Activated B cell treated with CpG ODN at 0.5 μM for 24 hours (primary cell): ENCODE measurements at regions of chr4 and their contacts with region 1.

Region 1: DNA sequence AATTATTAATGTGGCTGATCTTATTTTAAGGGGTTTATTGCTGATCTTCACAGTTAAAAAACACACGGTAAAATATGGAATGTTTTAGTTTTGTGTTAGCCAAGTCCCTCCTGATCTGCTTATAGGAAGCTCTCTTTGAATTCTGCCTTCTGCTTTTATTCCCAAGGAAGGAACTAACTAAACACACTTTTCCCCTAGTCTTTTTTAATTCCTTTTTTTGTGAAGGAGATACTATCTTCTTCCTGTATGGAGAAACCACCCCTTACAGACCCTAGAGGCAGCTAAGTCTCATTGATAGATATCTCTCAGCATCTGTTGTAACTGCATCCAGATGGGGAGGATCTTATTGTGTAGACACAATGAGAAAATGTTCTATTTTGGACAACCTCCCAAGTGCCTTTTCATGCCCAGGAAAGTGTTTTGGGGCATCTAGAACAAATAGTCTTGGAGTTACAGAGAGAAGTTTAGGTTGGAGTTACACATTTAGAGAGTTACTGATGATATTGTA is 64.4 kb downstream of the AFF1 start:
- DNase-seq: no peak
- ATAC-seq: no peak
- H3K4me3 Mint-ChIP-seq: peak overlapping the region; percentile 6
- H3K27ac Mint-ChIP-seq: peak overlapping the region; percentile 42
- H3K4me1 Mint-ChIP-seq: peaks cover 49% of the 10 kb centered on the region
- H3K27me3 Mint-ChIP-seq: no peaks in the 10 kb centered on the region
- CTCF ChIP-seq: no peak

Region 2: DNA sequence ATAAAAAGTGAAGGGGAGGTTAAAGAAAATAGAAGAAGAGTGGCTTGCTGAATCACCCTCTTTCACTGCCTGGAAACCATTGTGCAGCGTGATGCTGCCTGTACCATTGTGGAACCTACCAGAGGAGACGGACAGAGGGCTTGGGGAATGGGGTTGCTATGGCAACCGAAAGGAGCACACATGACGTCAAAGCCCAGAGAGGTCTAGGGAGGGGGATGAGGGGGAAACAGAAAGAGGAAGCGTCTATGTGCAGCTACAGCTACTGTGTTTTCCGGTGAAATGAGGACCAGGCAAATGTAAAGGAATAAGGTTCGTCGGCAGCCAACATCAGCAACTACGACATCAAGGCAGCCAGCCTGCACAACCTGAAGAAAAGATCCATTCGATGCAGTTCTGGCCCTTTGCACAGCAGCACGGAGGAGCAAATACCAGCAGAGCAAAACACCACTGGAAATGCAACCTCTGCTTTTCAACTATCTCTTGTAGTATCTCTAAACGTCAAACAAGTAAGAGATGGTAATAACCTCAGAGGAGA is 639.2 kb before region 1 on chr4 and contains the start of gene MAPK10:
- CTCF ChIA-PET with region 1: no interaction called
- POLR2A ChIA-PET with region 1: no interaction called
- intact Hi-C with region 1: loop called (anchors 2 kb)
- DNase-seq: peak; percentile 55
- ATAC-seq: peak; percentile 98
- H3K4me3 Mint-ChIP-seq: peak within 1 kb of the TSS; percentile 83
- H3K27ac Mint-ChIP-seq: peak within 1 kb of the TSS; percentile 79
- H3K4me1 Mint-ChIP-seq: peaks cover 18% of the 10 kb centered on the region
- H3K27me3 Mint-ChIP-seq: no peaks in the 10 kb centered on the region
- CTCF ChIP-seq: no peak
- total RNA-seq, gene MAPK10: 0.20 and 0.75 TPM in 2 replicates

Region 3: DNA sequence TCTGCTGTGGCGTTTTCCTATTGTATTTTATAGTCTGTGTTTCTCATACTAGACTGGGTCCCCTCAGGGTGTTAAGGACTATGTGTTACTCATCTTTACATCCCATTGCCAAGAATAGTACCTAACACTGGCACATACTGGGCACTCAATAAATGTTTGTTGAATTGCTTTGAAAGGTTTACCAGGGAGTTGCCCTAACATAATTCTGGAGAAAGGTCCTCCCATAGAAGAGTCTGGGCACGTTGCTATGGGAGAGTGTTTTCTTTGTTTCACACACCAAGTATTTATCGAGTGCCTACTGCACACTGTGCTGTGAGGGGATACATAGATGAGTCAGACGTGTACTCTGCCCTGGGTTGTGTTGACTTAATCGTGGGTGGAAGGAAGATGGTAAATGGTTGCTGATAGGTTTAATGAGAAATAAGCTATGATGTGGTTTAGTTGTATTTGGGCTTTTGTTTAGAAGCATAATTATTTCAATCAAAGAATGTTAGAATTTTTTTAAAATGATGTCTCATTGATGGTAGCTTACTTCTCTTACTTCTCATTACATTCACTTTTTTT is 21.5 kb before region 1 on chr4:
- CTCF ChIA-PET with region 1: no interaction called
- POLR2A ChIA-PET with region 1: interaction called, 4 read pairs
- intact Hi-C with region 1: loop called (anchors 1 kb)
- DNase-seq: no peak
- ATAC-seq: peak; percentile 51
- H3K4me3 Mint-ChIP-seq: no peak overlapping the region
- H3K27ac Mint-ChIP-seq: no peak overlapping the region
- H3K4me1 Mint-ChIP-seq: peaks cover 50% of the 10 kb centered on the region
- H3K27me3 Mint-ChIP-seq: no peaks in the 10 kb centered on the region
- CTCF ChIP-seq: no peak

Region 4: GRCh38 chr4:87093443-87094123 is 94.4 kb after region 1 on chr4:
- CTCF ChIA-PET with region 1: interaction called, 15 read pairs
- POLR2A ChIA-PET with region 1: no interaction called
- intact Hi-C with region 1: loop called (anchors 1 kb)
- DNase-seq: no peak
- ATAC-seq: peak; percentile 89
- H3K4me3 Mint-ChIP-seq: no peak overlapping the region
- H3K27ac Mint-ChIP-seq: peak overlapping the region; percentile 62
- H3K4me1 Mint-ChIP-seq: peaks cover 20% of the 10 kb centered on the region
- H3K27me3 Mint-ChIP-seq: no peaks in the 10 kb centered on the region
- CTCF ChIP-seq: peak; percentile 15

Region 5: GRCh38 chr4:87209696-87210095 is 210.5 kb after region 1 on chr4:
- CTCF ChIA-PET with region 1: no interaction called
- POLR2A ChIA-PET with region 1: interaction called, 14 read pairs
- intact Hi-C with region 1: no loop called
- DNase-seq: peak; percentile 22
- ATAC-seq: peak; percentile 96
- H3K4me3 Mint-ChIP-seq: peak overlapping the region; percentile 71
- H3K27ac Mint-ChIP-seq: peak overlapping the region; percentile 80
- H3K4me1 Mint-ChIP-seq: peaks cover 20% of the 10 kb centered on the region
- H3K27me3 Mint-ChIP-seq: no peaks in the 10 kb centered on the region
- CTCF ChIP-seq: no peak

Region 6: DNA sequence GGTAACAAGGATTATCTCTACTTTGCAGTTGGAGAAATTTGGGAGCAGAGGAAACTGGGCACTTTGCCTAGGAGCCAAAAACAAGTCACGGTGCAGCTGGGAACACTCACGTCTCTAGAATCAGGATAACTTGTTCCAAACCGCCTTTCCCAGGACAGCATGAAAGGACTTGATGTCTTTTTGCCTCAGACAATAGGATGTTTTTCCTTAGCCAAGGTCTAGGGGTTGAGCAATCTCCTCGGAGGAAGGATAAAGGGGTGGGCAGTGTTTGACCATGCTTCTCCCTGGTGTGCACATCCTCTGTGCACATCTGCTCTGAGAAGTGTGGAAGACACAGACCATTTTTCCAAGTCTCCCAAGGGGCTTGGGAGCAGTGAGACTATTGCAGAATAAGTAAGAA is 531.7 kb after region 1 on chr4:
- CTCF ChIA-PET with region 1: no interaction called
- POLR2A ChIA-PET with region 1: no interaction called
- intact Hi-C with region 1: no loop called
- DNase-seq: no peak
- ATAC-seq: no peak
- H3K4me3 Mint-ChIP-seq: no peak overlapping the region
- H3K27ac Mint-ChIP-seq: no peak overlapping the region
- H3K4me1 Mint-ChIP-seq: no peaks in the 10 kb centered on the region
- H3K27me3 Mint-ChIP-seq: no peaks in the 10 kb centered on the region
- CTCF ChIP-seq: no peak